ENCODE measurements at regions of chr2 and their contacts with region 1.

Region 1: GRCh38 chr2:172931918-172932520 is 143.6 kb upstream of the MAP3K20 start:
- DNase-seq: no peak
- H3K4me3 ChIP-seq: no peak overlapping the region
- CTCF ChIP-seq: peak; percentile 64

Region 2: DNA sequence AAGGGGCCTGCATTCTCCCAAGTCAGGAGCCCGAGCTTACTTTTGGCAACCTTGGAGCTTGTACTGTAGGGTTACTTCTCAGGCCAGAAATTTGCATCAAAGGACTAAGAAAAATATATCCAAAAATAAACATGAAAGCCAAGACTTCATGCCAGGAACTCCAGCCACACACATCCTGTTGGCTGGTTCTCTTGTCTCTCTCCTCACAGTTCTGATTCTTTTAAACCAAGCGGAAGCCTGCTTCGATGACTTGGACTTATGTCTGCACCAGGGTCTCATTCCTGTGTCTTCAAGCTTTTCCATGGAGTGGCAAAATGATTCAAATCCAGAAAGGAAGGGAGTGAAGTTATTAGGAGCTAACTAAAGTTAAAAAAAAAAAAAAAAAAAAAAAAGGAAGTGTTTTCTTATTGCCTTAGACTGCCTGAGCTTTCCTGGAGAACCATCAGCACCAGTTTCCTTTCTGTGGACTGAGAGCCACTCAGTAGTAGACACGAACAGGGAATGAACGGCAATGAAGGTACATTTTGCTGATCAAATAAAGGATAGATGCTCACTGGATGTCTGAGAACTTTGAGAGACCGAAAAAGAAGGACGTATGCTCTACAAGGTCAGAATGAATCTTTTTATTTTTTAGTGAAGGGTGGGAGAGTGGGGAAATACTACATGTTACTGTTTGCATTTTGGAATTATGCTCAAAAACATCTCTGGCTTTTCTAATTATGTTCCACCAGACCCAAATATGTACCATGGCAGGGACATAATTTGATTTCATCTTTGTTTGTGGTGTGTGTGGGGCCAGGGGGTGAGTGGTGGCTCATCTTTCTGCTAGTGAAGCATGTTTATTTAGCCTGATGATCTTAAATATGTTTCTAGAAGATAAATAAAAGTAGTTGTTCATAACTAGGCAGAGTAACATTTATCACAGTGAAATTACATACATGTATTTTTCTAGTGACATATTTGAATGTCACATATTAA is 110.4 kb before region 1 on chr2:
- CTCF ChIA-PET with region 1: interaction called, 29 read pairs
- POLR2A ChIA-PET with region 1: no interaction called
- DNase-seq: no peak
- H3K4me3 ChIP-seq: no peak overlapping the region
- CTCF ChIP-seq: no peak

Region 3: DNA sequence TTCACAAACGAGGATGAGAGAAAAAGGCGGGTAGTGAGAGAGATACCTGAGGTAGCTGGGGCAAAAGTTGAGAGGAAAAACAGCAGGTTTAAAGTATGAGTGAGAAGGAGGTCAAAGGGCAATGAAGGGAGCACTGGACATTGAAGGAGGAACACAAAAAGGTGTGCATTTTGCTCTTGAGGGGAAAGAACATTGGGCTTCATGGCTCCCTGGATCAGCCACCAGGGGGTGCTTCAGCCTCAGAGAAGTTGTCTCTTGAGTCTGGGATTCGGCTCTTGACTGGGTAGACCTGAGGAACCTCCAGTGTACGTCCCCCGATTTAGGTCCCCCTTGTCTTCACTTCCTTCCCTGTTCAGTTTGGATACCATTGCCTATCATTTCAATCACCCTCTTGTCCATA is 67.8 kb before region 1 on chr2:
- CTCF ChIA-PET with region 1: interaction called, 98 read pairs
- POLR2A ChIA-PET with region 1: no interaction called
- DNase-seq: no peak
- H3K4me3 ChIP-seq: no peak overlapping the region
- CTCF ChIP-seq: peak; percentile 60

Region 4: DNA sequence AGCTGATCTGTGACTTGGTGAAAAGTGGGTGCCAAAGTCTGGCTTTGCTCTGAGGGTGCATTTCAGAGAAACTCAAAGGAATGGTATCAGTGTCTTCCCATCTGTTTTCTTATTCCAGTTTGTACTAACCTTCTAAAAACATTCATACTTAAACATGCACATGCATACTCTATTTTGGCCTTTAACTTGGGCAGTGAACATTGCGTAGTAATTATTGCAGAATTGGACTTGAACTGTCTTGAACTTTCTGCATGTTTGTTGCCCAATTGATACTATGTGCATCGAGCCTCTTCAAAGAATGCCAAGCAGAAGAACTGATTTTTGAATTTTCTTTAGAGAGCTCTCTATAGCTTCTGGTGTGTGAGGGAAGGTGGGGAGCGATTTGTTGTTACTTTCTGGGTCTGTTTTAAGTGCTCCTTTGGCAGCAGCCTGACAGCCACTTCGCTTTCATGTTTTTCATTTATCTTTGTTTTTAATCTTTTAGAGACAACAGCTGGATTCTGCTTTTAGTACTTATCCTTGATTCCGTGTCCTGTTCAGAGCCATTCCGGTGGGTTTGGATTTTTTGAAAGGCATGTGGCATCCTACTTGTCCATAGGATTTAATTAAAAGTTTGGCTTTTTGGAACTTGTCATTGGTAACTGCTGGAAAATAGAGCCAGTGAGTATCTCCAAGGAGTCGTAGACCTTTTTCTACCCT is 37.2 kb before region 1 on chr2:
- CTCF ChIA-PET with region 1: interaction called, 17 read pairs
- POLR2A ChIA-PET with region 1: no interaction called
- DNase-seq: no peak
- H3K4me3 ChIP-seq: no peak overlapping the region
- CTCF ChIP-seq: no peak

Region 5: GRCh38 chr2:172944022-172944793 is 12.2 kb after region 1 on chr2:
- CTCF ChIA-PET with region 1: interaction called, 38 read pairs
- POLR2A ChIA-PET with region 1: no interaction called
- DNase-seq: no peak
- H3K4me3 ChIP-seq: no peak overlapping the region
- CTCF ChIP-seq: no peak

Region 6: GRCh38 chr2:173210270-173211196 is 278.5 kb after region 1 on chr2:
- CTCF ChIA-PET with region 1: interaction called, 13 read pairs
- POLR2A ChIA-PET with region 1: no interaction called
- DNase-seq: peak; percentile 86
- H3K4me3 ChIP-seq: no peak overlapping the region
- CTCF ChIP-seq: peak; percentile 84